Esophagus squamous epithelium (tissue), 5 donors: ENCODE measurements at regions of chr12 and their contacts with region 1.

Region 1: DNA sequence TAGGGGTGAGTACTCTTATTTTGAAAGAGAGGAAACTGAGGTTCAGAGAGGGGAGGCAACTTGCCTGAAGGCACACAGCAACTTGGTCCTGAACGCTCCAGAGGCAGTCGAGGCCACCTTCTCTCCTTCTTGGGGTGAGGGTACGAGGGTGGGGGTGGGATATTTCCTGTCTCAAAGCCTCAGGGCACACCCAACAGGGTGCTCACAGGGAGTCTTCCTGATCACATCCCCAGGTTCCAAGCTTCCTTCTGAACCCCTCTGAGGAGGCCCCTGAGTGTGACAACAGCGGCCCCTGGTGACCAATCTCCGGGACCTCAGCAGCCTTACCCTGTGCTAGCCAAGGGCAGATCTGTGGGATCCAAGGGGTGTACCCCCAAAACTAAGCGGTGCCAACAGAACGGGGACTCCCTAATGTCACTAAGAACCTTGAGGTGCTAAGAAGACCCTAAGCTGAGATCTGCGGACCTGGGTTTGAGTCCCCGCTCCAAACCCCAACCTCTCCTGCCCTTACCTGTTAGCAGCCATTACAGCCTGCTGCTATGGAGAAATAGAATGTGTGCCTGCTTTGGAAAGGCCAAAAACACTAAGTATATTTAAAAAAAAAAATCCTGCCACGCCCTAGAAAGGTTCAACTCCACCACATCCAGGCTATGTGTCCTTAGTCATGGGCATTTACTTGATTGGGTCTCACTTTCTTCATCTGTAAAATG is 57.9 kb downstream of the TRPV4 start:
- DNase-seq: no peak
- H3K4me3 ChIP-seq: no peak overlapping the region
- H3K27ac ChIP-seq: no peak overlapping the region
- H3K4me1 ChIP-seq: peaks cover 0 to 15% (median 6%) of the 10 kb centered on the region in 3 donors
- H3K27me3 ChIP-seq: peaks cover 0 to 3% (median 0%) of the 10 kb centered on the region in 4 donors
- CTCF ChIP-seq: peak; percentile 73 to 88 (median 82)
- POLR2A ChIP-seq: no peak

Region 2: GRCh38 chr12:109428037-109428629 is 347.2 kb before region 1 on chr12:
- intact Hi-C with region 1: loop called (anchors 10 kb)
- DNase-seq: no peak
- H3K4me3 ChIP-seq: no peak overlapping the region
- H3K27ac ChIP-seq: no peak overlapping the region
- H3K4me1 ChIP-seq: peaks cover 2 to 5% (median 5%) of the 10 kb centered on the region in 3 donors
- H3K27me3 ChIP-seq: peaks cover 0 to 4% (median 0%) of the 10 kb centered on the region in 4 donors
- CTCF ChIP-seq: peak; percentile 82 to 98 (median 91)
- POLR2A ChIP-seq: no peak

Region 3: DNA sequence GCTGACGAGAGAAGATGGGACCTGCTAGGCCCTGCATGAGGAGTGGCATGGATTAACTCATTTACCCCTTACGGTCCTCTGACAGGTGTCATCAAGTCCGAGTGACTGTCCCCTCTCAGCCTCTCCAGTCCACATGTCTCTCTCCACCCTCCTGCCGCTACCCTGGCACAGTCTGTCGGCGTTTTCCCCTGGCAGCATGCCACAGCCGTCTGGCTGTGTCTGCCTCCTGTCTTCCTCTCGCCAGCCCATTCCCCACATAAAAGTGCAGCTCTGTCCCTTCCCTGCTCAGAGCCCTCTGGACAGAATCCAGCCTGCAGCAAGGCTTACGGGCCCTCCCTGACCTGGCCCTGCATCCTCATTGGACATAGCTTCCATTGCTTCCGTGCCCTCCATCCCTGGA is 252.3 kb before region 1 on chr12:
- intact Hi-C with region 1: loop called (anchors 5 kb)
- DNase-seq: no peak
- H3K4me3 ChIP-seq: no peak overlapping the region
- H3K27ac ChIP-seq: no peak overlapping the region
- H3K4me1 ChIP-seq: peaks cover 0 to 18% (median 12%) of the 10 kb centered on the region in 3 donors
- H3K27me3 ChIP-seq: no peaks in the 10 kb centered on the region
- CTCF ChIP-seq: no peak
- POLR2A ChIP-seq: no peak

Region 4: DNA sequence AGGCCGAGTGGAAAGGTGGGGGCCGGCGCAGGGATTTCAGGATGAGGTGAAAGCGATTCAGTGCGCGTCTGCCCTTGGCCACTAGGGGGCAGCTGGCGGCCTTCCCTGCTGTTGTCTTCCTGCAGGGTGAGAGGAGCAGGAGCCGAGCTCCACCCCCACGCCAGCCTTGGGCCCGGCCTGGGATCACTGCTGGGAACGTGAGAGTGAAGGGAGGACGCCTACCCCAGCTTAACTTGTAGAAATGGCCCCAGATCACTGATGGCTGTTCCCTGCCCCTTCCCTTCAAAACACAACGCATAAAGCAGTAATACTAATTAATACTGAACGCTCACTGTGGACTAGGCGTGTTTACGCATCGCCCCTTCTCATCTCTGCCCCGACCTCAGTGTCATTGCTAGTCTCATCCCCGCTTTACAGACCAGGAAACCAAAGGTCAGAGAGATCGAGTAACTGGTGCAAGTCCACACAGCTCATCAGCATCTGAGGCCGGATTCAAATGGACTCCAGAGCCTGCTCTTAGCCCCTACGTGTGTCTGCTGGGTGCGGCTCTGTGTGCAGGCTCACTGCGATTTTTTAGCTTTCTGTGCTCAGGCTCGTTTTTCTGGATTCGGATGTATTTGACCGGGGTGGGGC is 177.4 kb before region 1 on chr12:
- intact Hi-C with region 1: loop called (anchors 5 kb)
- DNase-seq: no peak
- H3K4me3 ChIP-seq: no peak overlapping the region
- H3K27ac ChIP-seq: no peak overlapping the region
- H3K4me1 ChIP-seq: peaks cover 7 to 11% (median 7%) of the 10 kb centered on the region in 3 donors
- H3K27me3 ChIP-seq: peaks cover 0 to 13% (median 0%) of the 10 kb centered on the region in 4 donors
- CTCF ChIP-seq: peak; percentile 90 to 97 (median 94)
- POLR2A ChIP-seq: no peak